A549 (cell line): ENCODE measurements at regions of chr6 and their contacts with region 1.

Region 1: GRCh38 chr6:133916650-133917151 is 27.8 kb downstream of the TCF21 start:
- DNase-seq: peak; percentile 35 to 93
- ATAC-seq: peak; percentile 90 to 93
- H3K4me3 ChIP-seq: no peak overlapping the region
- H3K27ac ChIP-seq: peak overlapping the region; percentile 88 to 91
- H3K4me1 ChIP-seq: peaks cover 23% of the 10 kb centered on the region
- CTCF ChIP-seq: peak; percentile 88
- EP300 ChIP-seq: no peak
- POLR2A ChIP-seq: no peak
- RAD21 ChIP-seq: peak; percentile 96

Region 2: DNA sequence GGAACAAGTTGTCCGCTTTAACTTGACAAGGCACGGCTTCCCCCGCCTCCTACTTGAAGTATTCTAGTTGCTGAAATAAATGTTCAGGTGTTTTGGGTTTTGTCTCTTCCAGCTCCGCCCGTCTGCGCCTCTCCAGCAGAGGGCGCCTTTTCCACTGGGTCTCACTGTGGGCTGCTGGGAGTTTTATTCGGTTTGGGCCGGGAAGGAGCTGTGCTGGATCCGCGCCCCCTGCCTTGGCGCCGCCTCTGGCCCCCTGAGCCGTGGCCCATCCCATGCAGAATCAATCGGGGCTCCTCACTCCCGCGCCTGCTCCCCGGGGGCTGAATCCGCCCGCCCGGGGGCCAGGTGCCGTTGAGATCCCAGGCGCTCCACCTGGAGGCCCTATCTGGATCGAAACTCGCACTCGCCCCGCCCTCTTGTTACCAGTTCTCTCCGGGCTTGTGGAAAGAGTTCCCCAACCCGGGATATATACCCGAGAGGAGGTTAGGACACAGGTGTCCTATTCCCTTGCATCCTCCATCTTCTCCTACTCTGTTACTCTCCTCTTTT is 78.8 kb before region 1 on chr6:
- CTCF ChIA-PET with region 1: interaction called, 43 read pairs
- POLR2A ChIA-PET with region 1: no interaction called
- DNase-seq: peak; percentile 28 to 81
- ATAC-seq: peak; percentile 96 to 97
- H3K4me3 ChIP-seq: peak overlapping the region; percentile 56
- H3K27ac ChIP-seq: peak overlapping the region; percentile 94 to 96
- H3K4me1 ChIP-seq: peaks cover 20% of the 10 kb centered on the region; the same call in 1 of the 3 replicates
- CTCF ChIP-seq: peak; percentile 89
- EP300 ChIP-seq: no peak
- POLR2A ChIP-seq: no peak
- RAD21 ChIP-seq: peak; percentile 58 to 74

Region 3: DNA sequence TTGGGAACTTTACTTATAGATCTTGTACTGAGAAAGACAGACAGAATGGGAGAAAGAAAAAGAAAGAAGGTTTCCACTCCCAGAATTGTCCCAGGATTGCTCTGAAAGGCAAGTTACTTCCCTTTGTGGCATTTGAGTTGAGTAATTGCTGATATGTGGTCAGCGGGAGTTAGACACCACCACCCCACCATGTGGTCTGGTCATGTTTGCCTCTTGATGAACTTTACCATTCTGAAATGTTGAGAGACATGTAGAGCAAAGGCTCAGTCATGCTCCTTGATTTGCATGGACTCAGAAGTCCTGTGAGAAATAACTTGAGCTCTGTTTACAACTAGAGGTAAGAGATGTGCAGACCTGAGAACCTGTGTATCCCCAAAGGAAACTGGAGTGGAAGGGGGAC is 10.7 kb before region 1 on chr6:
- CTCF ChIA-PET with region 1: interaction called, 15 read pairs
- POLR2A ChIA-PET with region 1: no interaction called
- DNase-seq: no peak
- ATAC-seq: no peak
- H3K4me3 ChIP-seq: no peak overlapping the region
- H3K27ac ChIP-seq: peak overlapping the region in 1 of 2 experiments; percentile 30; a peak in 2 of 6 replicates
- H3K4me1 ChIP-seq: no peaks in the 10 kb centered on the region
- CTCF ChIP-seq: no peak
- EP300 ChIP-seq: no peak
- POLR2A ChIP-seq: no peak
- RAD21 ChIP-seq: no peak

Region 4: GRCh38 chr6:134161036-134161435 is 244.3 kb after region 1 on chr6:
- CTCF ChIA-PET with region 1: no interaction called
- POLR2A ChIA-PET with region 1: no interaction called
- DNase-seq: no peak
- ATAC-seq: no peak
- H3K4me3 ChIP-seq: no peak overlapping the region
- H3K27ac ChIP-seq: peak overlapping the region; percentile 21 to 37; a peak in 1 of 6 replicates
- H3K4me1 ChIP-seq: peaks cover 5% of the 10 kb centered on the region; the same call in 1 of the 3 replicates
- CTCF ChIP-seq: no peak
- EP300 ChIP-seq: no peak
- POLR2A ChIP-seq: no peak
- RAD21 ChIP-seq: no peak